ENCODE measurements at regions of chr16 and their contacts with region 1.

Region 1: DNA sequence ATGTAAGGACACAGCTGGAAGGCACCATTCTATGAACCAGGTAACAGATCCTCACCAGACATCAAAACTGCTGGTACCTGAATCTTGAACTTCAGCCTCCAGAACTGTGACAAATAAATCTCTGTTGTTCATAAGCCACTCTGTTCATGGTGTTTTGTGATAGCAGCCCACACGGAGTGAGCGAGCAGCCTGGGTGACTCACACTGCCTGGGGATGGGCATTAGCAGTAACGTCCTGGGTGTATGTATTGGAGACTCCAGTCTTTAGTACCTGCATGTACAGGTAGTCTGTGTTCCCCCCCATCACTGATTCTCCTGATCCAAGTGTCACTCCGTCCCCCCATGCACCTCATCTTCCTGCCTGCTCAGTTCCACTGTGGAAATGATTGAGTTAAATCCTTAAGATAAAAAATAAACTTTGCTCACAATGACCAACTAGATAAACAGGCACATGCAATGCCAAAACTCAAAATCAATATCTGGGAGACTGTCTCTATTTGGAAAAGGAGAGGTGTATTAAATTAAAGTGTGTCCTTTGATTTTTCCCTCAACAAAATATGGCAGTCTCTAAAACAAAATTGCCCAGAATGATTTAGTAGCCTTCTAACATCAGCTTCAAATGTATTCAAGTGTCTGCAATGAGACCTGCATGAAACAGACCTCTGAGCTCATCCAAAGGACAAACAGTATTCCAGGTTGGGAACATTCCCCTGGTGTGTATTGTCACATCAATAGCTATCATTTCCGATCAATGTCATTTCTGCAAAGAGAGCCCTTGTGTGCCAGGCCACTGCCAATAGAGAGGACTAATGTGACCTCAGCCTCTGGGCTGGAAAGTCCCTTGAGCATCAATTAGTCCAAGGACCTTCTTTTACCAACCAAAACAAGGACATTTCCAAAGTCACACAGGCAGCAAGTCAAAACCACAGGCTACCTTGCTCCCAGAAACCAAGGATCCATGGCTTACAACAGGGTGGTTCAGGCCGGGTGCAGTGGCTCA is 12.2 kb upstream of the VAT1L start:
- DNase-seq: peak; percentile 39
- ATAC-seq: peak; percentile 87
- H3K4me3 ChIP-seq: no peak overlapping the region
- H3K27ac ChIP-seq: peak overlapping the region; percentile 48
- H3K4me1 ChIP-seq: peaks cover 46% of the 10 kb centered on the region
- H3K27me3 ChIP-seq: no peaks in the 10 kb centered on the region
- CTCF ChIP-seq: no peak
- EP300 ChIP-seq: peak in 1 of 2 experiments; percentile 55; a peak in 1 of 4 replicates
- POLR2A ChIP-seq: no peak
- RAD21 ChIP-seq: no peak

Region 2: GRCh38 chr16:77745972-77746371 is 30.2 kb before region 1 on chr16:
- CTCF ChIA-PET with region 1: no interaction called
- POLR2A ChIA-PET with region 1: no interaction called
- in situ Hi-C with region 1: no loop called
- intact Hi-C with region 1: loop called (anchors 2 kb)
- DNase-seq: no peak
- ATAC-seq: no peak
- H3K4me3 ChIP-seq: no peak overlapping the region
- H3K27ac ChIP-seq: no peak overlapping the region
- H3K4me1 ChIP-seq: peaks cover 29% of the 10 kb centered on the region
- H3K27me3 ChIP-seq: no peaks in the 10 kb centered on the region
- CTCF ChIP-seq: no peak
- EP300 ChIP-seq: no peak
- POLR2A ChIP-seq: no peak
- RAD21 ChIP-seq: no peak